ENCODE measurements at regions of chr12 and their contacts with region 1.

Region 1: GRCh38 chr12:132429946-132430643 is 59.9 kb upstream of the FBRSL1 start:
- DNase-seq: peak; percentile 69 to 76
- H3K4me3 ChIP-seq: peak overlapping the region; percentile 21
- H3K4me3 Mint-ChIP-seq: peak overlapping the region; percentile 67
- H3K27ac Mint-ChIP-seq: peak overlapping the region; percentile 69
- H3K4me1 ChIP-seq: peaks cover 23% of the 10 kb centered on the region
- H3K4me1 Mint-ChIP-seq: peaks cover 6% of the 10 kb centered on the region
- H3K27me3 ChIP-seq: no peaks in the 10 kb centered on the region
- H3K27me3 Mint-ChIP-seq: no peaks in the 10 kb centered on the region
- CTCF ChIP-seq: no peak

Region 2: DNA sequence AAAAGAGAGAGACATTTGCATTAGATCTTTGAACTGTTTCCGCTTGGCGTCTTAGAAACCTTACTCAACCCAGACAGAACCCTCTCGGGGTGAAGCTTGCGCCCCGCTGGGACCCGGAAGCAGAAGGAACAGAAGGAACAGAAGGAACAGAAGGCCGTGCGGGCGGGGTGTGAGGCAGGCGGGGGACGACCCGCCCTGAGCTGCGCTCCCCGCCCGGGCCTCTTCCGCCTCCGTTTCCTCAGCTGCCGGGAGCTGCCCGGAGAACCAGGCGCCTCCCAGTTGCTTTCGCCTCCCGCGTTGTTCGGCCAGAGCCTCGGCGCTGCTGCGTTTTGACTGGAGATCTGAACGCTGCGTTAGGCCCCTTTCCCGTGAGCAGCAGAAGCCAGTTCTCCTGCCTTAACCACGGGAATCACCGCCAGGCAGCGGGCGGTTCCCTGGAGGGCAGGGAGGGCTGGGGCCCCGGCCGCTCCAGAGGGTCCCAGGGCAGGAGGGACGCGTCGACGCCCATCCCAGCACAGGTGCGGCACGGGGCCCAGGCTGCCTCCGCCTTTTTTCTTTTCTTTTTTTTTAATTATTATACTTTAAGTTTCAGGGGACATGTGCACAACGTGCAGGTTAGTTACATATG is 621.2 kb before region 1 on chr12:
- CTCF ChIA-PET with region 1: no interaction called
- POLR2A ChIA-PET with region 1: no interaction called
- intact Hi-C with region 1: no loop called
- DNase-seq: no peak
- H3K4me3 ChIP-seq: peak overlapping the region; percentile 32
- H3K4me3 Mint-ChIP-seq: peak overlapping the region; percentile 57
- H3K27ac Mint-ChIP-seq: no peak overlapping the region
- H3K4me1 ChIP-seq: no peaks in the 10 kb centered on the region
- H3K4me1 Mint-ChIP-seq: no peaks in the 10 kb centered on the region
- H3K27me3 ChIP-seq: no peaks in the 10 kb centered on the region
- H3K27me3 Mint-ChIP-seq: no peaks in the 10 kb centered on the region
- CTCF ChIP-seq: no peak

Region 3: DNA sequence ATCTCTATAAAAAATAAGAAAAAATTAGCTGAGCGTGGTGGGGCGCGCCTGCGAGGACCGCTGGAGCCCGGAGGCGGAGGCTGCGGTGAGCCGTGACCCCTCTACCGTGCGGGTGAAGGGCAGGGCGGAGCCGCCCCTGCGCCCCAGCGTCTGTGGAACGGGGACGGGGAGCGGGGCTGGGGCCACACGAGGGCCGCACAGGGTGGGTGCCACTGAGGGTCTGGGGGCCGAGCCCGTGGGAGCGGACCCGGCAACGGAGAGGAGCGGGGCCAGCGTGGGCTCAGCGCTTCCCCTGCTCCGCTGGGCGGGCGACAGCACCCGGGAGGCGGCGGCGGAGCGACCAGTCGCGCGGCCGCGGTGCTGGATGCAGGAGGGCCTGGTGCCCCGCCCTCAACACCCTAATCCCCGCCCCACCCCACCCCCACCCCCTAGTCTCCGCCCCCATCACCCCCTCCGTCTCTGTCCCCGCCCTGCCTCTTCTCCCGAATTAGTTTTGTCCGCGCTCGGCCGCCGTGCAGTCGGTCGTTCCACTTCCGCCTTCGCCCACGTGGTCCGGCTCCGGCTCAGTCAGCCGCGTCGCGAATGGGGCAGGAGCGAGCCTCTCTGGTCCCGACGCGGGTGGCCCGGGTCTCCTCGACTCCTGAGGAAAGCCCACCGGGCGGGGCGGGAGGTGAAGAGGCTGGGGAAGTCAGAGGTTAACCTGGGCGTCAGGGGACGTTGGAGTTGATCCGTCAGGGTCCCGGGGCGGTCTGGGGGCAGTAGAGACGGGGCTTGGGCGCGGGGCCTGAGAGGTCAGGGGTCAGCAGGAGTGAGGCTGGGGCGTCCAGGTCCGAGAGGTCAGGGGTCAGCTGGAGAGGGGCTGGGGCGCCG is 501.1 kb before region 1 on chr12 and contains the start of gene PUS1:
- CTCF ChIA-PET with region 1: no interaction called
- POLR2A ChIA-PET with region 1: no interaction called
- intact Hi-C with region 1: no loop called
- DNase-seq: peak; percentile 95 to 96
- H3K4me3 ChIP-seq: peak within 1 kb of the TSS; percentile 96
- H3K4me3 Mint-ChIP-seq: peak within 1 kb of the TSS; percentile 97
- H3K27ac Mint-ChIP-seq: peak within 1 kb of the TSS; percentile 97
- H3K4me1 ChIP-seq: no peaks in the 10 kb centered on the region; the same call in 1 of the 2 replicates
- H3K4me1 Mint-ChIP-seq: peaks cover 11% of the 10 kb centered on the region
- H3K27me3 ChIP-seq: no peaks in the 10 kb centered on the region
- H3K27me3 Mint-ChIP-seq: no peaks in the 10 kb centered on the region
- CTCF ChIP-seq: no peak
- total RNA-seq, gene PUS1: 65.6 and 71.9 TPM in 2 replicates

Region 4: GRCh38 chr12:132248453-132249167 is 181.5 kb before region 1 on chr12:
- CTCF ChIA-PET with region 1: no interaction called
- POLR2A ChIA-PET with region 1: no interaction called
- intact Hi-C with region 1: no loop called
- DNase-seq: no peak
- H3K4me3 ChIP-seq: no peak overlapping the region
- H3K4me3 Mint-ChIP-seq: no peak overlapping the region
- H3K27ac Mint-ChIP-seq: no peak overlapping the region
- H3K4me1 ChIP-seq: no peaks in the 10 kb centered on the region
- H3K4me1 Mint-ChIP-seq: no peaks in the 10 kb centered on the region
- H3K27me3 ChIP-seq: no peaks in the 10 kb centered on the region
- H3K27me3 Mint-ChIP-seq: peaks cover 24% of the 10 kb centered on the region
- CTCF ChIP-seq: no peak

Region 5: DNA sequence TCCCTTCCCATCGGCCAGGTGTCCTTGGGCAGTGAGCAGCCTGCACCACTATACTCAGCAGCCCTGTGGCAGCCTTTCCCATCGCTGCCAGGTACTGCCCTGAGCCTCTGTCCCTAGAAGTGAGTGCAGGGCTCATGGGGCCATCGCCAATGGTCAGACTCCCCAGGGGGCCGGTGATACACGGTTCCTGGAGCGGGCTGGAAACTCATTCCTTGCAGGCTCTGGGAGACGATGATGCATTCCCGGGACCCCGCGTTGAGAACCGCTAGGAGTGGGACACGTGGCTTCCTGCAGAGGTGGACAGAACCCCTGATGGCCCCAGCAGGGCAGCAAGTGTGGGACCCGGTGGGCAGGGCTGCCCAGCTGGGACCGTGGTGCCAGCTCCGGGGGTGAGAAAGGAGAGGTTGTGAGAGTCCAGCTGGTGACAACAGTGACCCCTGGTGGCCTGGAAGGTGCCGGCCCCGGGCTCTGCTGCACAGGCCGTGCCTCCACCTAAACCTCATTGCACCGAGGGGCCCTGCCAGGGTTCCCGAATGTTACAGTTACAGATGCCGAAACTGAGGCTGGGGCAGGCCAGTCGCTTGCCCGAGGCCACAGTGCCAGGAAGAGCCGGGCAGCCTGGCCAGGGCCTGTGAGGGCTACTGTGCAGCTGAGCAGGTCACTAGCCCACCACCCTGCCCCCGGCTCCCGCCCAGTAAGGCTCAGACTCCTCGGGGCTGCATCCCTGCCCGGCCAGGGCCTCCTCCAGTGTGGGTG is 93.7 kb after region 1 on chr12:
- CTCF ChIA-PET with region 1: interaction called, 7 read pairs
- POLR2A ChIA-PET with region 1: no interaction called
- intact Hi-C with region 1: loop called (anchors 5 kb)
- DNase-seq: peak; percentile 61 to 78
- H3K4me3 ChIP-seq: no peak overlapping the region
- H3K4me3 Mint-ChIP-seq: no peak overlapping the region
- H3K27ac Mint-ChIP-seq: no peak overlapping the region
- H3K4me1 ChIP-seq: peaks cover 12% of the 10 kb centered on the region
- H3K4me1 Mint-ChIP-seq: peaks cover 4% of the 10 kb centered on the region
- H3K27me3 ChIP-seq: no peaks in the 10 kb centered on the region
- H3K27me3 Mint-ChIP-seq: no peaks in the 10 kb centered on the region
- CTCF ChIP-seq: peak; percentile 84 to 85

Measured in Caco-2 (cell line).